HepG2 (cell line): ENCODE measurements at regions of chr2 and their contacts with region 1.

Region 1: DNA sequence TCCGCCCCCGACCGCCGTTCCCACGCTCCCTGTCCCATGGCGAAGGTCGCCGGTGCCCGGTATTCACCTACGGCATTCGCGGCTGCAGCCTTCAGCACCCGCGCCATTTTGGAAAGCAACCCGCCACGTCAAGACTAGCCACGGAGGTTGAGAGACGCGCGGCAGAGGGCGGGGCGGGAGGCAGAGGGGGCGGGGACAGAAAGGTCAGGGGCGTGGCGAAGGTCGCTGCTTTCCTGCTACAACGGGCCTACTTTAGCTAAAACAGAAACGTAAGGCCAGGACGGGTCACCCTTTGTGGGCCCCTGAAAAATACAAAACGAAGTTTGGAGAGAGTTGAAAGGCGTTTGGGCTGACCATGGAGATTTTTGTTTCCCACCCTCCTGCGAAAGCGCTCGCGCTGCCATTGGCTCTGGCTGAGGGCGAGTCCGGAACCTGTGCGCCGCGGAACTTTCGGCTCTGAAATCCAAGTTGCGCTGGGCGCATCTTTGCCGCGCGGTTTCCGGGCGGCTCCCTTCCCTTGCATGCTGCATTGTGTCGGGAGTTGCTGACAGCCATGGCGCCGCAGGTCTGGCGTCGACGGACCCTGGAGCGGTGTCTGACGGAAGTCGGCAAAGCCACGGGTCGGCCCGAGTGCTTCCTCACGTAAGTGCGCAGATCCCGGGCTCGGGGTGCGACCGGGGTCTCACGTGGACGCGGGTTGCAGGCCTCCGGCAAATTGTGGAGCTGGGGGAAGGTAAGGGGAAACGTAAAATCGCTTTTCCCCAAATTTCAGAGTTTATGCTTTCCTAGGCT is at the starts of genes MCEE and MPHOSPH10:
- DNase-seq: peak; percentile 85
- ATAC-seq: peak; percentile 89
- H3K4me3 ChIP-seq: peak within 1 kb of the TSS; percentile 82 to 94 (median 86)
- H3K27ac ChIP-seq: peak within 1 kb of the TSS; percentile 96
- H3K4me1 ChIP-seq: peaks cover 68% of the 10 kb centered on the region
- H3K27me3 ChIP-seq: no peaks in the 10 kb centered on the region; a peak in 1 of 5 replicates
- CTCF ChIP-seq: peak; percentile 30
- EP300 ChIP-seq: peak in 1 of 2 experiments; percentile 65; a peak in 1 of 4 replicates
- POLR2A ChIP-seq: peak; percentile 84 to 88
- RAD21 ChIP-seq: peak; percentile 57; the same call in 1 of the 2 replicates
- total RNA-seq, gene MCEE: 56.1 and 66.9 TPM in 2 replicates
- total RNA-seq, gene MPHOSPH10: 137 and 201 TPM in 2 replicates

Region 2: GRCh38 chr2:70977605-70978205 is 152.6 kb before region 1 on chr2:
- CTCF ChIA-PET with region 1: no interaction called
- POLR2A ChIA-PET with region 1: no interaction called
- in situ Hi-C with region 1: no loop called
- intact Hi-C with region 1: no loop called
- DNase-seq: peak; percentile 36
- ATAC-seq: no peak
- H3K4me3 ChIP-seq: peak overlapping the region; percentile 29 to 75 (median 36); a peak in 5 of 6 replicates
- H3K27ac ChIP-seq: no peak overlapping the region
- H3K4me1 ChIP-seq: peaks cover 14% of the 10 kb centered on the region
- H3K27me3 ChIP-seq: no peaks in the 10 kb centered on the region
- CTCF ChIP-seq: no peak
- EP300 ChIP-seq: no peak
- POLR2A ChIP-seq: no peak
- RAD21 ChIP-seq: no peak

Region 3: DNA sequence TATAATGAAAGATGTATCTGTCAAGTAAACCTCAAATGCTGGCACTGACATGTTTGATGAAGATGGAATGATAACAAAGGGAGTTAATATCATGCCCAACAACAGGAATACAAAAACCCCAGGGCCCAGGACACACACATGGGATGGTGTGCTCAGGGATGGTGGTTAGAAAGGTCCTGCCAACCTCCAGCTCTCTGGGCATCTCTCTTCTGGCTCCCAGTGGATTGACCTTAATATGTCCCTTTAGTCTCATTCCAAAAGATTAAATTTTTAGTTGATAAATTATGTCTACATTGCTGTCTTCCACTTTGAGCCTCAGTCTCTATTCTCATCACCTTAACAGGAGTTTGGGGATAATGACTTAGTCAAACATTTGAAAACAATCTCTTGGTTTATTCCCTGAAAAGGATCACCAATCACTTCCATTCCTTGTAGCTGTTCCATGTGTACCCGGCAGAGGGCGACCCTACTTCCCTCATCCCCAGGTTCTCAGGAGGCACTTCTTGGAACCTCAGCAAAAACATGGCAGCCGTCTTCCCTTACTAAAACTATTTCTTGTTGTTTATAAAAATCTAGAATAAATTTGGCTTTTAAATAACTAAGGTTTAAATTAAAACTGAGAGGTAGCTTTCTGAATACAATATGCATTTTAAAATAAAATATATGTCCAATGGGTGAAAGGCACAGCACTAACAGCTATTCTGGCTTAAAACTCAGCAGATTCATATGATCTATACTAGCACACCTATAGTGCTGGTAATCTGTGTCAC is 29.9 kb before region 1 on chr2:
- CTCF ChIA-PET with region 1: no interaction called
- POLR2A ChIA-PET with region 1: interaction called, 25 read pairs
- in situ Hi-C with region 1: no loop called
- intact Hi-C with region 1: loop called (anchors 1 kb)
- DNase-seq: peak; percentile 57
- ATAC-seq: peak; percentile 76
- H3K4me3 ChIP-seq: no peak overlapping the region
- H3K27ac ChIP-seq: no peak overlapping the region
- H3K4me1 ChIP-seq: peaks cover 45% of the 10 kb centered on the region
- H3K27me3 ChIP-seq: 0 out of 5 replicates have a peak, but pooled peaks cover 0 to 7% of the 10 kb centered on the region in 2 experiments
- CTCF ChIP-seq: peak; percentile 83
- EP300 ChIP-seq: no peak
- POLR2A ChIP-seq: no peak
- RAD21 ChIP-seq: peak; percentile 72

Region 4: GRCh38 chr2:71150082-71150816 is 19.9 kb after region 1 on chr2:
- CTCF ChIA-PET with region 1: no interaction called
- POLR2A ChIA-PET with region 1: interaction called, 13 read pairs
- in situ Hi-C with region 1: no loop called
- intact Hi-C with region 1: no loop called
- DNase-seq: no peak
- ATAC-seq: peak; percentile 51
- H3K4me3 ChIP-seq: no peak overlapping the region
- H3K27ac ChIP-seq: no peak overlapping the region
- H3K4me1 ChIP-seq: no peaks in the 10 kb centered on the region
- H3K27me3 ChIP-seq: peaks cover 0 to 3% of the 10 kb centered on the region in 2 experiments; a peak in 2 of 5 replicates
- CTCF ChIP-seq: no peak
- EP300 ChIP-seq: no peak
- POLR2A ChIP-seq: peak; percentile 34 to 39; a peak in 2 of 4 replicates
- RAD21 ChIP-seq: no peak

Region 5: GRCh38 chr2:71206271-71206670 is 76.0 kb after region 1 on chr2:
- CTCF ChIA-PET with region 1: no interaction called
- POLR2A ChIA-PET with region 1: no interaction called
- in situ Hi-C with region 1: no loop called
- intact Hi-C with region 1: no loop called
- DNase-seq: no peak
- ATAC-seq: no peak
- H3K4me3 ChIP-seq: no peak overlapping the region
- H3K27ac ChIP-seq: no peak overlapping the region
- H3K4me1 ChIP-seq: no peaks in the 10 kb centered on the region
- H3K27me3 ChIP-seq: no peaks in the 10 kb centered on the region; a peak in 1 of 5 replicates
- CTCF ChIP-seq: no peak
- EP300 ChIP-seq: no peak
- POLR2A ChIP-seq: no peak
- RAD21 ChIP-seq: no peak

Region 6: GRCh38 chr2:71331581-71332434 is 201.5 kb after region 1 on chr2 and contains the start of gene ZNF638:
- CTCF ChIA-PET with region 1: no interaction called
- POLR2A ChIA-PET with region 1: interaction called, 12 read pairs
- in situ Hi-C with region 1: no loop called
- intact Hi-C with region 1: no loop called
- DNase-seq: peak; percentile 90
- ATAC-seq: peak; percentile 96
- H3K4me3 ChIP-seq: peak within 1 kb of the TSS; percentile 93 to 99 (median 96)
- H3K27ac ChIP-seq: peak within 1 kb of the TSS; percentile 96
- H3K4me1 ChIP-seq: peaks cover 59% of the 10 kb centered on the region
- H3K27me3 ChIP-seq: peaks cover 0 to 5% of the 10 kb centered on the region in 2 experiments; a peak in 1 of 5 replicates
- CTCF ChIP-seq: peak; percentile 84
- EP300 ChIP-seq: peak; percentile 11 to 51; a peak in 3 of 4 replicates
- POLR2A ChIP-seq: peak; percentile 78 to 93
- RAD21 ChIP-seq: peak; percentile 48
- total RNA-seq, gene ZNF638: 133 and 144 TPM in 2 replicates